CD8-positive, alpha-beta T cell (primary cell): ENCODE measurements at regions of chr2 and their contacts with region 1.

Region 1: DNA sequence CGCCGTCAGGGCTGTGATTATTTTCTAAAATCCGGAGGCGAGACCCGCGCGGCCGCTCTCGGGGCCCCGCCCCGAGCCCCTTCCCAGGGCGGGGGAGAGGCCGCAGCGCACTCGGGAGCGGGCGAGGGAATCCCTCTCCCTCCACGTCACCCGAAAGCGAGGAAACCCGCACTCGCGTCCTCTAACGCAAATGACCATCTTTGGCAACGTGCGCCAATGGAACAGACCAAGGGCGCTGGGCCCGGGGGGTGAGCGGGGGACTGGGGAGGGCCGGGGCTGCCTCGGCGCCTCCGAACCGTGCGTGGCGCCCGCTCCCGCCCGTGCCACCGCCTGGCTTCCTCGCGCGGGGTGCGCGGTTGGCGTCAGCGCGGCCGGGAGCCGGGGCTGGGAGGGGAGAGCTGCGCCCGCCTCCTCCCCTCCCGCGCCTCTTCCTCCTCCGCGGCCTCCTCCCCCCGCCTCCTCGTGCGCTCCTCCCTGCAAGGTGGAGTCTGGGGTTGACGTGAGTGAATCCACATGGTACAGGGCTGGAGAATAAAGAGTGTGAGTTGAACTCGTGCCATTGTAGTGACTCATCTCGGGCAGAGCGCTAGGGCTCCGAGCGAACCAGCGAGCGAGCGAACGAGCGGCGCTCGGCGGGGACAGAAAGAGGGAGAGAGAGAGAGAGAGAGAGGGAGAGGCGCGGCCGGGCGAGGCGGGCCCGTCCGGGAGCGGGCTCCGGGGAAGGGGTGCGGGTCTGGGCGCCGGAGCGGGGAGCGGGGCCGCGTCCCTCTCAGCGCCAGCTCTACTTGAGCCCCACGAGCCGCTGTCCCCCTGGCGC is at the start of gene FOSL2:
- DNase-seq: peak; percentile 83 to 99 (median 92)
- ATAC-seq: peak; percentile 69
- H3K4me3 ChIP-seq: peak within 1 kb of the TSS; percentile 69 to 78
- H3K4me3 Mint-ChIP-seq: peak within 1 kb of the TSS; percentile 86
- H3K27ac ChIP-seq: peak within 1 kb of the TSS; percentile 85 to 95
- H3K27ac Mint-ChIP-seq: peak within 1 kb of the TSS; percentile 97
- H3K4me1 ChIP-seq: peaks cover 36% of the 10 kb centered on the region
- H3K4me1 Mint-ChIP-seq: peaks cover 25% of the 10 kb centered on the region
- H3K27me3 ChIP-seq: no peaks in the 10 kb centered on the region
- H3K27me3 Mint-ChIP-seq: no peaks in the 10 kb centered on the region
- CTCF ChIP-seq: no peak
- total RNA-seq, gene FOSL2: 359 to 360 TPM

Region 2: GRCh38 chr2:27703638-27704341 is 688.7 kb before region 1 on chr2:
- CTCF ChIA-PET with region 1: no interaction called
- POLR2A ChIA-PET with region 1: no interaction called
- intact Hi-C with region 1: loop called in 1 of 2 experiments (anchors 5 kb)
- DNase-seq: peak; percentile 73 to 90 (median 84)
- ATAC-seq: peak; percentile 84
- H3K4me3 ChIP-seq: no peak overlapping the region
- H3K4me3 Mint-ChIP-seq: no peak overlapping the region
- H3K27ac ChIP-seq: no peak overlapping the region
- H3K27ac Mint-ChIP-seq: no peak overlapping the region
- H3K4me1 ChIP-seq: no peaks in the 10 kb centered on the region
- H3K4me1 Mint-ChIP-seq: peaks cover 3% of the 10 kb centered on the region
- H3K27me3 ChIP-seq: no peaks in the 10 kb centered on the region
- H3K27me3 Mint-ChIP-seq: no peaks in the 10 kb centered on the region
- CTCF ChIP-seq: peak; percentile 84

Region 3: DNA sequence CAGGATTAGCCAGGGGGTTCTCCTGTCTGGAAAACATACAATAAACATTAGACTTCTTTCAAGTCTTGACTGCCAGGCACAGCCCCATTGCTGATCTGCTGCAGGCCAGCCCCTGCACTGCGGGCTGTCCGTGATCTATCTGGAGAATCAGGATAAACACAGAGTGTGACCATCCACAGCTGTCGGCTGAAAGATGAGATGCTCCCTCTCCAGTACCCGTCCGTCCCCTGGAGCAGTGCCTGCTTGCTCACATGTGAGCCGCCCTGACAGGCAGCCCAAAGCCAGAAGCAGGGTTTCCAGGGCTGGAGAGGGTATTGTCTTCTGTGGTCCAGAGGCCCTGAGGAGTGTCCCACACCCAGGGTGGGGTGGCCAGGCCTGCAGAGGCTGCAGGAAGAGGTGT is 45.9 kb before region 1 on chr2:
- CTCF ChIA-PET with region 1: no interaction called
- POLR2A ChIA-PET with region 1: no interaction called
- intact Hi-C with region 1: loop called in 1 of 2 experiments (anchors 5 kb)
- DNase-seq: peak in 1 of 9 experiments; percentile 6
- ATAC-seq: no peak
- H3K4me3 ChIP-seq: no peak overlapping the region
- H3K4me3 Mint-ChIP-seq: no peak overlapping the region
- H3K27ac ChIP-seq: no peak overlapping the region
- H3K27ac Mint-ChIP-seq: peak overlapping the region; percentile 60
- H3K4me1 ChIP-seq: peaks cover 25% of the 10 kb centered on the region
- H3K4me1 Mint-ChIP-seq: peaks cover 26% of the 10 kb centered on the region
- H3K27me3 ChIP-seq: no peaks in the 10 kb centered on the region
- H3K27me3 Mint-ChIP-seq: no peaks in the 10 kb centered on the region
- CTCF ChIP-seq: no peak

Region 4: DNA sequence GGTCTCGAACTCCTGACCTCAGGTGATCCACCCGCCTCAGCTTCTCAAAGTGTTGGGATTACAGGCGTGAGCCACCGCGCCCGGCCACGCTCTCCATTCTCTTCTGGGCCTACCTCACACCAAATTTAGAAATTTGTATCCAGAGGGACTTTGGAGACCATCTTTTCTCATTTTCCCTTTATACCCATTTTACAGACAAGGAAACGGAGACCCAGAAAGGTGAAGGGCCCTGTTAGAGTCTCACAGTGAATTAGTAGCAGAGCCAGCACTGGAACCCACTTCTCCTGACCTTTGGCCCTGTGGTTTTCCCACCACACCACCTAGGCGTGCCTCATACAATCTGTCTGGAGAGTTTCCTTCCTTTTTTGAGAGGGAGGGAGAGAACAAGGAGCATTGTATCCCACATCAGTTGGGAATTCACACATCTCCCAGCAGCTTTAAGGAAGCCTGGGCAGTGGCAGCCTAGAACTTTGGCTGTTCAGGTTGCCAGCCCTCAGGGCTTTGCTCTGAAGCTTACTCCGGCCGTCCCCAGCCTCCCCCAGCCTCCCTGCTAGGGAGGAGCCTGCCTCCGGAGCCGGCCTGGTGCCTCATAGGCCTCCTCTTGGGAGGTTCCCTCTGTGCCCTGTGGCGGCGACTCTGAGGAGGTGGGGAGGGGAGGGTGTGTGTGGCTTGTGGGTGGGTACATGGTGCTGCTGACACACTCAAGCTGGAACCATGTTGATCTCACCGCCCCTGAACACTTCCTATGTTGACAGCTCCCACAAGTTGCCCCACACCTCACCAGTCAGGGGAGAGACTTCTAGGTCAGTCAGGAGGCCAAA is 14.0 kb after region 1 on chr2:
- CTCF ChIA-PET with region 1: interaction called, 6 read pairs
- POLR2A ChIA-PET with region 1: interaction called, 12 read pairs
- intact Hi-C with region 1: loop called (anchors 1 kb)
- DNase-seq: peak; percentile 47 to 93 (median 76)
- ATAC-seq: peak; percentile 60
- H3K4me3 ChIP-seq: no peak overlapping the region
- H3K4me3 Mint-ChIP-seq: peak overlapping the region; percentile 44
- H3K27ac ChIP-seq: peak overlapping the region; percentile 28 to 96
- H3K27ac Mint-ChIP-seq: peak overlapping the region; percentile 91
- H3K4me1 ChIP-seq: peaks cover 75% of the 10 kb centered on the region
- H3K4me1 Mint-ChIP-seq: peaks cover 76% of the 10 kb centered on the region
- H3K27me3 ChIP-seq: no peaks in the 10 kb centered on the region
- H3K27me3 Mint-ChIP-seq: no peaks in the 10 kb centered on the region
- CTCF ChIP-seq: no peak

Region 5: DNA sequence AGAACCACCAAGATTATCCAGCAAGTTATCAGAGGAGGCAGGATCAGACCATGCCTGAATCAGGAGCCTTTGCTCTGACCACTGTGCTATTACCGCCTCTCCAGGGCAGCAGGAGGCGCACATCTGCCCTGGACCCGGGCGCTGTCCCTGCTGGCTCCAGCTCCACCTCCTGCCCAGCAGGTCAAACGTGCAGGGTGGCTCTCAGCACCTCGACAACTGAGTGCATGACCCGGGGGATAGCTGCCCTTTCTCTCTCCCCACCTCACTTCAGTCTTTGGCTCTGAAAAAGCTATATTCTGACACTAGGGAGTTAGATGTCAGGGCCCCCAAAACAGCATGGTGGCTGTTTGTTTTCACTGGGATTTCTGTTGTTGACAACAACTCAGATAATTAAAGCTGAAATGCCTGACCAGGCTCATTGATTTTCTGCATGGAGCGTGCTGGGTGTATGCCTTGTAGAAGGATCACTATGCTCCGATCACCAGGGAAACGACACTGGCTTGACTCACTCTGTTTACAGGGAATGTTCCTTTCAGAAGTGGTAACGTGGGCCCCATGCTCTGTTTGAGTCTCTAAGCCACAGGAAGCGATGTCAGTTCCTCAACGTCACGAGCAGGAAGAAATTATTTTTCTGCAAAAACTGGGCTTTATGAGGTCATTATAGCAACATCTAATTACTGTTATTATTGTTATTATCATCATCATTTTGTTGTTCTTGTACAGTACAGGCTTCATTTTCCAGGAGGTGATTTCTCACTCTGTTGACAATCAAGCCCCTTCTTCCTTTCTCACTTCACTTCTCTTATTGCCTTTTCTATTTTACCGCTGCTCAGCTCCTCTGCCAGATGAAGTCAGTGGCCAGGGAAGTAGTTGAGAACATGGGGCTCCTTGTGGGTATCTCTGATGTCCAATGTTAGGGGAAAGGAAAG is 228.9 kb after region 1 on chr2:
- CTCF ChIA-PET with region 1: no interaction called
- POLR2A ChIA-PET with region 1: no interaction called
- intact Hi-C with region 1: loop called in 1 of 2 experiments (anchors 2 kb)
- DNase-seq: peak; percentile 60 to 96 (median 78)
- ATAC-seq: peak; percentile 85
- H3K4me3 ChIP-seq: peak overlapping the region; percentile 19 to 33
- H3K4me3 Mint-ChIP-seq: peak overlapping the region; percentile 68
- H3K27ac ChIP-seq: peak overlapping the region; percentile 86 to 98
- H3K27ac Mint-ChIP-seq: peak overlapping the region; percentile 99
- H3K4me1 ChIP-seq: peaks cover 87% of the 10 kb centered on the region
- H3K4me1 Mint-ChIP-seq: peaks cover 92% of the 10 kb centered on the region
- H3K27me3 ChIP-seq: no peaks in the 10 kb centered on the region
- H3K27me3 Mint-ChIP-seq: no peaks in the 10 kb centered on the region
- CTCF ChIP-seq: no peak

Region 6: DNA sequence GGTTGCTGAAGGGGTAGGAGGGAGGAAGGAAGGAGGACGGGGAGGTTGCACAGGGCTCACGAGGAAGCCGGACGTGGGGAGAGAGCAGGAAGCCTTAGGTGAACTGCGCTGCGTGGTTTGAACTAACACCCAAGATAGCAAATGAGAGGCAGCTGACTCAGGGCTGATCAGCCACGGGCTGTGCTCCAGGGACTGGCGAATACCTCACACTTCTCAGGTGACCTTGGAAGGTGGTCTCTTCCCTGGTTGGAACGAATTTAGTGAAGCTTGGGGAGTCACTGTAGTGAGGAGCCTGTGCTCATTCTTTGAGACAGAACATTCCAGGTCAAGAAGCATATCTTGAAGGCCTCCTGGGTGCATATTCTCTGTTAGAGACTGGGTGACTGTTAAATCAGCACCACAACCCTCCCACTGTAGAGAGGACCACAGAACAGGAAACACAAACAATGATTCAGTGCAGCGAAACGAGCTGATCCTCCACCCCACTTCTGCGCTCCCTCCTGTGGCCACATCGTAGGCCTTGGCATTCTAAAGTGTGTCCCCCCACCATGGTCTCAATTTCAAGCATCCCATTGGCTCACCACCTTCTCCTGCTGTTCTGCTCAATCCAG is 622.4 kb after region 1 on chr2:
- CTCF ChIA-PET with region 1: no interaction called
- POLR2A ChIA-PET with region 1: no interaction called
- intact Hi-C with region 1: loop called in 1 of 2 experiments (anchors 10 kb)
- DNase-seq: peak; percentile 46 to 93 (median 82)
- ATAC-seq: peak; percentile 57
- H3K4me3 ChIP-seq: peak overlapping the region; percentile 27 to 37
- H3K4me3 Mint-ChIP-seq: peak overlapping the region; percentile 75
- H3K27ac ChIP-seq: peak overlapping the region; percentile 85 to 98
- H3K27ac Mint-ChIP-seq: peak overlapping the region; percentile 99
- H3K4me1 ChIP-seq: peaks cover 72% of the 10 kb centered on the region
- H3K4me1 Mint-ChIP-seq: peaks cover 76% of the 10 kb centered on the region
- H3K27me3 ChIP-seq: no peaks in the 10 kb centered on the region
- H3K27me3 Mint-ChIP-seq: no peaks in the 10 kb centered on the region
- CTCF ChIP-seq: peak; percentile 63